A673 (cell line): ENCODE measurements at regions of chr7 and their contacts with region 1.

Region 1: GRCh38 chr7:50142425-50143017 is 49.5 kb upstream of the ZPBP start:
- DNase-seq: peak; percentile 57
- H3K4me3 ChIP-seq: no peak overlapping the region
- H3K27ac ChIP-seq: no peak overlapping the region
- H3K4me1 ChIP-seq: no peaks in the 10 kb centered on the region
- H3K27me3 ChIP-seq: no peaks in the 10 kb centered on the region
- CTCF ChIP-seq: peak; percentile 80

Region 2: DNA sequence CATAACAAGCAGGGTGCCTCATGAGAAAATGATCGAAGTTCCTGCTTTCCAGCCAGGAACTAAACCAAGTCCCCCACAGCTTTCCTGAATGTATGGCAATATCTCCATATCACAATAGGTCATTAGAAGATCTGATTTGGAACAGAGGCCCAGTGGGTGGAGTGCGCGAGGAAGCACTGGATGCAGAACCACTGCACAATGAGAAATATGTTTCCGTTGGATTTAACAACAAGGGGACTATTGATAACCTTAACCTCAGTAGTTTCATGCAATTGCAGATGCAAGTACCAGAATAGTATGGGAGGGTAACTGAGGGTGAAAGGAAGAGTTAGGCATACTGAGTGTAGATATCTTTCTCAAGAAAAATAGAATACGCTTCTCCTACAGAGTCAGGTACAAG is 94.8 kb before region 1 on chr7:
- CTCF ChIA-PET with region 1: no interaction called
- POLR2A ChIA-PET with region 1: no interaction called
- intact Hi-C with region 1: no loop called
- DNase-seq: no peak
- H3K4me3 ChIP-seq: no peak overlapping the region
- H3K27ac ChIP-seq: no peak overlapping the region
- H3K4me1 ChIP-seq: no peaks in the 10 kb centered on the region
- H3K27me3 ChIP-seq: no peaks in the 10 kb centered on the region
- CTCF ChIP-seq: no peak

Region 3: DNA sequence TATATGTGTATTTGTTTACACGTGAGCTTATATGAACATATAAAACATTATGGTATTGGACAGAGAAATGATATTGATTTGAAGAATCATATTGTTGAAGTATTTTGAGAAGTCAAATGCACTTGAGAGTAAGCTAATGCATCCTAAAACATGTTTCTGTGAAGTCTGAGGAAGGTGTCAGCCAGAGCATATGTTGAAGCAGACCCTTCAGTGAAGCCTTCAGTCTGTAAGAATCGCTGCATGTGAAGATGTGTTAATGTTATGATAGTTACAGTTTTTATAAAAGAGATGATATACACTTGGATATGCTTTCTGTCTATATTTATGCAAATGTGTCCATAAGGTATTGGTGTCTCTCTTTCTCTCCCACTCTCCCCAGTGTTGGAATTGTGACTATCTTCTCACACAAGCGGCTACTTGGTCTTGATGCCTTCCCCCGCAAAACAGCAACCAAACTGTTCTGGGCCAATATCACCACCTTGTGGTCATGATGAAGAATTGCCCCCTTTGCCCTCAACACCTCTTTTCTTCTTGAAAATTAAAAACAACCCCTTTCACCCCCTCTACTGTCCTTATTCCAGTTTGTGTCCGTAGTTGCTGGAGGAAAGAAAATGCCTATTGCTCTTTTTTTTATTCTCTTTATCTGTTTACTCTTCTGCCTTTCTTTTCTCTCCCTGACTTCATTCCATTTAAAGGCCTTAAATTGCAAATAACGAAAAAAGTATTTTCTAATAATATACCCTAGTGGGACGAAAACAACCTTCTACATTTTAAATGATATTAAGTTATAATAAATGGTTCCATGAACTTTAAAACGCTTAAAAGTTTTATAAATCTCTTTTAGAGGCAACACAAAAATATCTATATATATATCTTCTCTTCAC is 226.9 kb after region 1 on chr7:
- CTCF ChIA-PET with region 1: no interaction called
- POLR2A ChIA-PET with region 1: no interaction called
- intact Hi-C with region 1: loop called (anchors 1 kb)
- DNase-seq: peak; percentile 79
- H3K4me3 ChIP-seq: no peak overlapping the region
- H3K27ac ChIP-seq: no peak overlapping the region
- H3K4me1 ChIP-seq: no peaks in the 10 kb centered on the region
- H3K27me3 ChIP-seq: no peaks in the 10 kb centered on the region
- CTCF ChIP-seq: peak; percentile 71

Region 4: DNA sequence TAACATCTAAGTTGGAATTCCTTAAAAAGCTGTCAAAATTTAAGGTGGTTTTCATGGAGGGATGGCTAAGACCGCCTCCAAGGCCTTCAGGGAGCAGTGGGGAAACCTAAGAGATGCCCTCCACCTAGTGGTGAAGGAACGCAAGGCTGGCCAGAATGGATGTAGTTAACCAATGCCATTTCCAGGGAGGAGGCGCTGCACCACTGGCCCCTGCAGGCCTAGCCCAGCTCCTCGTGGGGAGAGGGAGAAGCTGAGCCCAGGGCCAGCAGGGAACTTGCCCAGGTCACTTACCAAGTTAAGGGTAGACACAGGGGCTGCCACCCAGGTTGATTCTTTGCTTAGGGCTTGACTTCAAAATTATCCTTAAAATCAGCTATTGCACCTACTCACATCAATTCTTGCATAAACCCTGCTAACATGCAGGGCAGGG is 275.6 kb after region 1 on chr7:
- CTCF ChIA-PET with region 1: no interaction called
- POLR2A ChIA-PET with region 1: no interaction called
- intact Hi-C with region 1: loop called (anchors 1 kb)
- DNase-seq: peak; percentile 86
- H3K4me3 ChIP-seq: no peak overlapping the region
- H3K27ac ChIP-seq: no peak overlapping the region
- H3K4me1 ChIP-seq: no peaks in the 10 kb centered on the region
- H3K27me3 ChIP-seq: no peaks in the 10 kb centered on the region
- CTCF ChIP-seq: peak; percentile 89

Region 5: DNA sequence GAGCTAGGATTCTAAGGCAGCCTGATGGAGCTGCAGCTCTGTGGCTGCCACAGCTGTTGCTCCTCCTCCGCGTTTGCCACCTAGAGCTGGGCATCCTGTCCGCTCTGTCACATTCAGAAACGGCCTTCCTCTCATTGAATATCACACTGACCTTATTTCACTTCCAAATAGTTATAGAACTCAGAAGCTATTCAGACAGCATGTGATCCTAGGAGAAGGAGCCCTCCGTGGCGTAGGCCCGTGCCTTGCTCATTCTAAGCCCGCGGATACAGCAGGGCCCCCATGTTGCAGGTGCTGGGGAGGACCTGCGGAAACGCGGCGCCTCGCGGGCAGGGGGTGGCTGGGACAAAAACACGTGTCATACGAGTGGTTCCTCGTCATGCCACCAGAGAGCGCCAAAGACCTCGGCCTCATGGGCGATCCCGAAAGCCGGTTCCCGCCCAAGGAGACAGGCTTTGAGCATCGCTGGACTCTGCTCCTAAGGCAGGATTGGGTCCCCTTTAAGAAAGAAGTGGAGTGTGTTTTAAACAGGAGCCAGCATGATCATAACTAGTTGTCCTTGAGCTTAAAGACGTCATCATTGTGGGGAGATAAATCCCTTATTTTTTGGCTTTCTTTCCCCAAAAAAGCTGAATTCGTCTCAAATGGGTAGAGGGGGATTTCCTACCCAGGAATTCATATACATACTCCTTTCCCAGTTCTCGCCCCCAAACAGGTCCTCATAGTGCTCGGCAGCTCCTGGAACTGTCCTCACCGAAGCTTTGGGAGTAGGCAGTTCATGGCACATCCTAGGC is 325.5 kb after region 1 on chr7:
- CTCF ChIA-PET with region 1: no interaction called
- POLR2A ChIA-PET with region 1: no interaction called
- intact Hi-C with region 1: no loop called
- DNase-seq: peak; percentile 78
- H3K4me3 ChIP-seq: no peak overlapping the region
- H3K27ac ChIP-seq: no peak overlapping the region
- H3K4me1 ChIP-seq: no peaks in the 10 kb centered on the region
- H3K27me3 ChIP-seq: no peaks in the 10 kb centered on the region
- CTCF ChIP-seq: peak; percentile 82